ENCODE measurements at regions of chr17 and their contacts with region 1.

Region 1: DNA sequence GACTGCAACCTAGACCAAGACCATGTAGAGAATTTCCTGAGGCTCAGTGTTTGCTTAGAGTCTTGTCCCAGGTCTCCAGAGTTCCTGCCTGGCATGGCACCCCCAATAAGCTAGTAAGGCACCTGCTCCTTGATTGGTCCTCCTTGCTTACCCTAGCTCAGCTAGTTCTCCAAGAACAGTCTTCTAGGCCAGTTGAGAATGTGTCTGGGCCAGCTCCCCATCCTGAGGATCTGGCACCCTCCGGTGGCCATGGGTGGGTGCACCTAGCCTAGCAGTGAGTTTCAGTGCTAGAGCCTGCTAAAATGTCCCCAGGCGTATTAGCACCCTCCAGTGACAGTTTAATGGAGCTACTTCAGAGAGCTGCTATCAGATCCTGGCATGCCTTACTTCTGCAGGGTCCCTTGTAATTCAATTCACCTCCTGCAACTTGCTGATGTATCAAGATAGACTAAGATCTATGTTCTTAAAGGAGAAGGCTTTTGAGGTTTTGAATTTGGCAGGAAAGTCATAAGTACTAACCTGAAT is 44.4 kb upstream of the MED13 start:
- DNase-seq: peak; percentile 77 to 80
- H3K4me3 ChIP-seq: no peak overlapping the region
- H3K27ac ChIP-seq: no peak overlapping the region
- H3K4me1 ChIP-seq: peaks cover 0 to 8% (median 0%) of the 10 kb centered on the region in 4 experiments; a peak in 2 of 7 replicates
- H3K27me3 ChIP-seq: no peaks in the 10 kb centered on the region
- CTCF ChIP-seq: peak; percentile 90 to 99 (median 99)
- EP300 ChIP-seq: no peak
- POLR2A ChIP-seq: no peak
- RAD21 ChIP-seq: peak; percentile 99 to 100

Region 2: DNA sequence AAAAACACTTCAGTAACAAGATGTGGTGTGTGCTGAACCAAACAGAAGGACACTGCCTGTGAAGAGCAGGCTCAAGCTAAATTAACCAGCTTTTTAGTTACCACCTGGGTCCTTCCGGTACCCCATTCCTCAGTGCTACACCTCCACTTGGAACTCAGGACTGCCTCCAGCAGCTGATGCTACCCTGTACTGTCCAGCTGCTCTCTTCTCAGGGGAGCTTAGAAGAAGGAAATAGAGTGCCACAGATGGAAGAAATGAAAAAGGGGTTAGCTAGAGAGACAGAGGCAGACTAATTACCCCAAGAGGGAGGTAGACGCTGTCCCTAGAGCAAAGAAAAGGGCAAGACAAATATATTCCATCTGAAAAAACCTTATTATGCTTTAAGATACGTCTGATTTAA is 50.0 kb before region 1 on chr17:
- CTCF ChIA-PET with region 1: interaction called, 13 read pairs
- POLR2A ChIA-PET with region 1: interaction called, 5 read pairs
- DNase-seq: no peak
- H3K4me3 ChIP-seq: no peak overlapping the region
- H3K27ac ChIP-seq: no peak overlapping the region
- H3K4me1 ChIP-seq: peaks cover 0 to 6% (median 2%) of the 10 kb centered on the region in 4 experiments; a peak in 2 of 7 replicates
- H3K27me3 ChIP-seq: no peaks in the 10 kb centered on the region
- CTCF ChIP-seq: no peak
- EP300 ChIP-seq: no peak
- POLR2A ChIP-seq: no peak
- RAD21 ChIP-seq: no peak

Region 3: GRCh38 chr17:62075308-62075815 is 34.1 kb before region 1 on chr17:
- CTCF ChIA-PET with region 1: interaction called, 25 read pairs
- POLR2A ChIA-PET with region 1: no interaction called
- DNase-seq: no peak
- H3K4me3 ChIP-seq: no peak overlapping the region
- H3K27ac ChIP-seq: no peak overlapping the region
- H3K4me1 ChIP-seq: peaks cover 0 to 4% (median 0%) of the 10 kb centered on the region in 4 experiments; a peak in 1 of 7 replicates
- H3K27me3 ChIP-seq: no peaks in the 10 kb centered on the region
- CTCF ChIP-seq: no peak
- EP300 ChIP-seq: no peak
- POLR2A ChIP-seq: no peak
- RAD21 ChIP-seq: no peak

Region 4: DNA sequence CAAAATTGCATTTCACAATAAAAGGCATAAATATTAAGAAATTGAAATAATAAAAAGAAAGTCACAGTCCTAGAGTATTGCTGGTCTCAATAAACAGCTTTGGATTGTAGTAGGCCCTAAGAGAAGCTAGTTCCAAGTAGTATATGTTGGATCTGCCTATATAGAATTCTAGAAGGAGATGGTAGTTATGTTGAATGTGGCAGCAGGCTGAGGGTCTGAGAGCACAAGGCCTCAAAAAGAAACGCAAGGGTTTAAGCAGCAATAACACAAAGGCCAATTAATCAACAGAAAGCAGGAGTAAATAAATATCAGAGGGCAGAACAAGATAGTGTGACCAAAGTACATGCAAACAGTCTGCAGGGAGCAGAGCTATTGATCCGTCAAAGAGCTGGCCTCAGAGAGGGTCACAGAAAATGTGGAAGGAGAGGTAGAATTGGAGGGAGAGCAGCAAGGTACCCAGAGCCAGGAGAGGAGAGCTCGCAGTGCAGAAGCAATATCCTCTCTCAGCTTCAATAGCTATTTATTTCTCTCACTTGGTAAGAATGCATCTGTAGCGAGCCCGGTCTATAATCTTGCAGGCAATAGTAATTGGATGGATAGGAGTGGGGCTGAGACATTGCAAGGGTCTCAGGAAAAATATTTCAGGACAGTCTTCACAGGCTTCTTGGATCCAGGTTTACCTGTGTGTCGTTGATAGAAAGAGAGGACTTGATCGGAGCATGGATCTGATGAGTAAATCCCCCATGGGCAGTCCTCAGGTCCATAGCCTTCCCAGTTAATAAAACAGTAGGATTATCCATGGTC is 19.2 kb before region 1 on chr17:
- CTCF ChIA-PET with region 1: interaction called, 11 read pairs
- POLR2A ChIA-PET with region 1: no interaction called
- DNase-seq: no peak
- H3K4me3 ChIP-seq: no peak overlapping the region
- H3K27ac ChIP-seq: no peak overlapping the region
- H3K4me1 ChIP-seq: no peaks in the 10 kb centered on the region
- H3K27me3 ChIP-seq: no peaks in the 10 kb centered on the region
- CTCF ChIP-seq: no peak
- EP300 ChIP-seq: no peak
- POLR2A ChIP-seq: no peak
- RAD21 ChIP-seq: no peak

Region 5: GRCh38 chr17:62098623-62099231 is 10.7 kb before region 1 on chr17:
- CTCF ChIA-PET with region 1: interaction called, 16 read pairs
- POLR2A ChIA-PET with region 1: no interaction called
- DNase-seq: no peak
- H3K4me3 ChIP-seq: no peak overlapping the region
- H3K27ac ChIP-seq: no peak overlapping the region
- H3K4me1 ChIP-seq: no peaks in the 10 kb centered on the region
- H3K27me3 ChIP-seq: no peaks in the 10 kb centered on the region
- CTCF ChIP-seq: no peak
- EP300 ChIP-seq: no peak
- POLR2A ChIP-seq: no peak
- RAD21 ChIP-seq: no peak

Region 6: GRCh38 chr17:62121025-62121730 is 11.7 kb after region 1 on chr17:
- CTCF ChIA-PET with region 1: interaction called, 19 read pairs
- POLR2A ChIA-PET with region 1: no interaction called
- DNase-seq: no peak
- H3K4me3 ChIP-seq: no peak overlapping the region
- H3K27ac ChIP-seq: no peak overlapping the region
- H3K4me1 ChIP-seq: no peaks in the 10 kb centered on the region
- H3K27me3 ChIP-seq: no peaks in the 10 kb centered on the region
- CTCF ChIP-seq: no peak
- EP300 ChIP-seq: no peak
- POLR2A ChIP-seq: no peak
- RAD21 ChIP-seq: no peak